ENCODE measurements at regions of chr5 and their contacts with region 1.

Region 1: GRCh38 chr5:88690409-88691229 is 192.4 kb downstream of the MEF2C start:
- DNase-seq: peak; percentile 72
- H3K4me3 ChIP-seq: peak overlapping the region in 1 of 3 experiments; percentile 3
- H3K27ac ChIP-seq: no peak overlapping the region
- H3K4me1 ChIP-seq: peaks cover 7% of the 10 kb centered on the region
- H3K27me3 ChIP-seq: peaks cover 91 to 98% of the 10 kb centered on the region in 2 experiments
- CTCF ChIP-seq: peak; percentile 88 to 96
- POLR2A ChIP-seq: no peak

Region 2: DNA sequence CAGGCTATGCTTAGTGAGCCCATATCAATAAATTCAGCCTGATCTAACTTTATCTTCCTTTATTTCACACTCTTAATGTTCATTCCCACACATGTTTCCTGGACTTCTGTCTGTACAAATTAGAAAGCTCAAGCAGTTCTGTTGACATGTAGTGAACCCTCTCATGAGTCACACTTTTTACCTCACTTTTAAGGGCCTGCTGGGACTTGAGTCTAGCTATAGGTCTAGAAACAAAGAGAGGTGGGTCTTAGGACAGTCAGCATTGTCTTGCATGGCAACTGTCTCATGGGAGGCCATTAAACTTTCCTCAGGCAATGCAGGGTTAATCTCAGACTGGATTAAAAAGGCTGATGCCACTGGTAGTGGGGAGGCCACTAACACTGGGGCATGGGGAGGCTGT is 1269.3 kb before region 1 on chr5:
- CTCF ChIA-PET with region 1: interaction called, 4 read pairs
- POLR2A ChIA-PET with region 1: no interaction called
- dilution Hi-C with region 1: no loop called
- intact Hi-C with region 1: loop called (anchors 1 kb)
- DNase-seq: no peak
- H3K4me3 ChIP-seq: no peak overlapping the region
- H3K27ac ChIP-seq: no peak overlapping the region
- H3K4me1 ChIP-seq: no peaks in the 10 kb centered on the region
- H3K27me3 ChIP-seq: no peaks in the 10 kb centered on the region
- CTCF ChIP-seq: no peak
- POLR2A ChIP-seq: no peak

Region 3: DNA sequence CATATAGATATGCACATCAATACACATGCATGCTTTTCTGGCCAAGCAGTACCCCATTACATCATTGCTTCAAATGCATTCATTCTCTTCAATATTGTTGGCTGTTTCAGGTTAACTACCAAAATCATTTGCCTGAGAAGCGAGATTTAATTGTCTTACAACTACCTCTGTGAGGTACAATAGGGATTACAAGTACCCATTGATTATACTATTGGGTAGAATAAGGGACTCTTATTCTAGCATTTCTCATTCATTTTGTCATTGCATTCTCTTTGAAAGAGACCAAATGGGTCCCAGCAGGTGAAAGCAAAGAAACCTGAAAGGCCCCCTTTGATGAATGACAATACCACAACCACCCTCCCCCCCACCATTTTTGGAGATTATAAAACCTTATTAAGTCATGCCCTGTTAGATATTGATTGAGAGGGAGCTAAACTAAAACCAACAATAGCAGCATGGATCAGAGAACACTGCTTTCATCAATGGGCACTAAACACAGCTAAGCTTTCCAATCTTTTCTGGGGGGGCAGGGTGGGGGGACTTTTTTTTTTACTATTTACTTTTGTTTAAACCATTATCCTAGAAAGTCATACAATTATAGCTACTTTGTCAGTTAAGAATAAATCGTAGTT is 902.9 kb before region 1 on chr5:
- CTCF ChIA-PET with region 1: interaction called, 255 read pairs
- POLR2A ChIA-PET with region 1: no interaction called
- dilution Hi-C with region 1: no loop called
- intact Hi-C with region 1: no loop called
- DNase-seq: no peak
- H3K4me3 ChIP-seq: no peak overlapping the region
- H3K27ac ChIP-seq: no peak overlapping the region
- H3K4me1 ChIP-seq: no peaks in the 10 kb centered on the region
- H3K27me3 ChIP-seq: peaks cover 0 to under 1% of the 10 kb centered on the region in 2 experiments
- CTCF ChIP-seq: no peak
- POLR2A ChIP-seq: no peak

Region 4: GRCh38 chr5:88613050-88613449 is 77.6 kb before region 1 on chr5:
- CTCF ChIA-PET with region 1: no interaction called
- POLR2A ChIA-PET with region 1: no interaction called
- dilution Hi-C with region 1: no loop called
- intact Hi-C with region 1: no loop called
- DNase-seq: no peak
- H3K4me3 ChIP-seq: no peak overlapping the region
- H3K27ac ChIP-seq: no peak overlapping the region
- H3K4me1 ChIP-seq: no peaks in the 10 kb centered on the region
- H3K27me3 ChIP-seq: no peaks in the 10 kb centered on the region
- CTCF ChIP-seq: no peak
- POLR2A ChIP-seq: no peak

Region 5: GRCh38 chr5:88660947-88661805 is 29.4 kb before region 1 on chr5:
- CTCF ChIA-PET with region 1: interaction called, 27 read pairs
- POLR2A ChIA-PET with region 1: no interaction called
- dilution Hi-C with region 1: no loop called
- intact Hi-C with region 1: no loop called
- DNase-seq: peak; percentile 51
- H3K4me3 ChIP-seq: peak overlapping the region in 2 of 3 experiments; percentile 19 to 34
- H3K27ac ChIP-seq: no peak overlapping the region
- H3K4me1 ChIP-seq: peaks cover 5% of the 10 kb centered on the region
- H3K27me3 ChIP-seq: peaks cover 60 to 97% of the 10 kb centered on the region in 2 experiments
- CTCF ChIP-seq: no peak
- POLR2A ChIP-seq: no peak

Region 6: DNA sequence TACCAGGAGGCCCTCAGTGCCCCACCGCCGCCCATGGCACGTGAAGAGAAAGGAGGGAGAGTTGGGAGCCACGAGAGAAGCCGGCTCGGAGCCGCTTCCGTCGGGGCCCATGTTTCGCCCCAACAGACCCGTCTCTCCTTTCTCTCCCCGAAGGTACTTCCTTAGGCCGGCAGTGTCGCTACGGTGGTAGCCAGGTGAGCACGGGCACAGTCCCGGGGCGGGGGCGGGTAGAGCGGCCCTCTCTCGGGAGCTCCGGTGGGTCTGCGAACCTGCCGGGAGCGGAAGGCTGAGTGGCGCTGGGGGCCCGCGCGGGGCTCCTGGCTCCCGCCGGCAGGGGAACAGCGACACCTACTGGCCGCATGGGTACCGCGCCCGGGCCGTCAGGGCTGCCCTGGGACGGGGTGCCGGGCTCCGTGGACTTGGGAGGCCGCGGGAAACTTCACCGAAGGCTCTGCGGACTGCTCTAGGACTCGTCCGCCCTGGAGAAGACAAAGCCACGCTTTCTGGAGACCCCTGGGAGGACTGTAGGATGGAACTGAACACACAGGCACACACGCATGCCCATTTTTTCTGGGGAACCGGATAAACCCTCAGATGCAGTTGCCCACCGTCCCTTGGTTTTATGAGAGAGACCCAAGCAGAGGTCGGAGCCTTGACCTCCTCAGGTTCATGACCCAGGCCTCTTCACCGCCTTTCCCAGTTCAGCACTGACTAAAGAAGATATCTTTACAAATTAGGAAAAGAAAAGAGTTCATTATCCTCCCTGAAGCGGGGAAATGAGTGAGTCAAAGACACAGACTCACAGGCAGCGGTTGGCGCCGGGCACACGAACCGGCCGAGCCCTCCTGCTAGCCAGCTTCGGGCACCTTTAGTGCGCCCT is 10.1 kb before region 1 on chr5:
- CTCF ChIA-PET with region 1: interaction called, 41 read pairs
- POLR2A ChIA-PET with region 1: no interaction called
- dilution Hi-C with region 1: no loop called
- intact Hi-C with region 1: loop called (anchors 1 kb)
- DNase-seq: peak; percentile 37
- H3K4me3 ChIP-seq: peak overlapping the region in 1 of 3 experiments; percentile 34
- H3K27ac ChIP-seq: no peak overlapping the region
- H3K4me1 ChIP-seq: peaks cover 8% of the 10 kb centered on the region
- H3K27me3 ChIP-seq: peaks cover 83 to 99% of the 10 kb centered on the region in 2 experiments
- CTCF ChIP-seq: peak; percentile 90 to 97
- POLR2A ChIP-seq: no peak

Region 7: GRCh38 chr5:88707216-88707965 is 16.8 kb after region 1 on chr5:
- CTCF ChIA-PET with region 1: interaction called, 12 read pairs
- POLR2A ChIA-PET with region 1: no interaction called
- dilution Hi-C with region 1: no loop called
- intact Hi-C with region 1: no loop called
- DNase-seq: no peak
- H3K4me3 ChIP-seq: no peak overlapping the region
- H3K27ac ChIP-seq: no peak overlapping the region
- H3K4me1 ChIP-seq: no peaks in the 10 kb centered on the region
- H3K27me3 ChIP-seq: peaks cover 10 to 12% of the 10 kb centered on the region in 2 experiments
- CTCF ChIP-seq: no peak
- POLR2A ChIP-seq: no peak

Region 8: DNA sequence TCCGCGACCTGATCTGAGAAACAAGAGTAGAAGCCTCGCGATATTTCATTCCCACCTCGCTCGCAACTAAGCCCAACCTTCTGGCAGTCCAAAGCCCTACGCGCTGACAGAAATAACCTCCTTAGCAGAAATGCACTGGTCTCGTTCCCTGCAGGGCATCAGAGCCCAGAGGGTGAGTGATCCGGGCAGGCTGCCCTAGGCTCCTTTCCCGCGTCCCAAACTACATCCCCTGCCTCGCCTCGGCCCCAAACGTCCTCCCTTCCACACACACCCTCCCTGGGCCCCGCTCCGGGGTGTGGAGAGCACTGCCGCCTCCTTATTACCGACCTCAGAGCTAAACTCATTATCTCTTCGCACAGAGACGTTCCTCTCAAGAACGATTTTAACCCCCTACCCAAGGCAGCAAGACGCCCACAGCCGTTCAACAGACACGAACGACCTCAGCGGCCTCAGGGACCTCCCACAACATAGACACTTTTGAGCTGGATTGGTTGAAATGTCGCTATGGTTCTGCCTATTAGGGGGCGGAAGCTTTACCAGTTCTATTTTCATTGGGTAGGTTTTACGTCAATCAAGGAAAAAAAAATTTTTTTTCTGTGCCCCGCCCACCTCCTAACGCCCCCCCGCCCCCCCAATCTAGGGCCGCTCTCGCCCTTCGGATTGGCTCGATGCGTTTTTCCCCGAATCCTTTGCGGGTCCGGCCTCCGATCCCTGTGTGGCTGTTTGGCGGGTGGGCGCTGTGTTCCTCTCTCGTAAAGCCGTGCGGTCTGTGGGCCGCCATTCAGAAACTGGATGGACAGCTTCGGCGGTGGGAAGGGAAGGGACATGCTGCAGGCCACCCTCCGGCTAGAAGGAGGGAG is 1718.9 kb after region 1 on chr5 and contains the start of gene CETN3:
- CTCF ChIA-PET with region 1: no interaction called
- POLR2A ChIA-PET with region 1: no interaction called
- dilution Hi-C with region 1: no loop called
- intact Hi-C with region 1: loop called (anchors 10 kb)
- DNase-seq: peak; percentile 96
- H3K4me3 ChIP-seq: peak within 1 kb of the TSS; percentile 82 to 95 (median 83)
- H3K27ac ChIP-seq: peak within 1 kb of the TSS; percentile 94
- H3K4me1 ChIP-seq: peaks cover 15% of the 10 kb centered on the region
- H3K27me3 ChIP-seq: no peaks in the 10 kb centered on the region
- CTCF ChIP-seq: no peak
- POLR2A ChIP-seq: peak; percentile 94
- total RNA-seq, gene CETN3: 15.5 and 17.3 TPM in 2 replicates